Right cardiac atrium (tissue), 5 donors: ENCODE measurements at regions of chr4 and their contacts with region 1.

Region 1: DNA sequence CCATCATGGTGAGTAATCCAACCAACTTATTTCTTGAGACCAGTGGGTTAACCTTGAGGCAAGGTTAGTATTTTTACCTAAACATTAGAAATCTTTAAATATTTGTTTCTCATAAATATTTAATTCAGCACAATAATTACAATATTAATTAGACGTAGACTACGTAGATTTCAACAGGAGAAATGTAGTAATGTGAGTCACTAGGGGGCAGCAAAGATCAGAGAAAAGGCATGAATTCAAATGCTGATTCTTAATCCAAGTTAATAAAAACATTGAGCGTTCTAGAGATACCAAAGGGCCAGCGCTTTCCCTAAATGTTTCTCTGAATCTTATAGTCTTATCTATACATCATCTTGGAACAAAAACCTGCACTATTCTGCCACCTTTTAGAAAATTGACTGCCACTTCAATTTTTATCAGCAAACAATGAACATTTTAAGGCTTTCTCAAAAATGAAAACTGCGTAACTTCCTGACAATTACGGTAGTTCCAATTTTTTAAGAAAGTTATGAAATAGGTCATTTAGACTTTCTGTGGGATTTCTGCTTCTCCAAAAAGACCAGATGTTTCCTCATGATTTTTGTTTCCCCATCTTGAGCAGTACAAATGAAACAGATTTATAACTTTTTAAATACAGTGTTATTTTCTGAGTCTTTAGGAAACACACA is 180.7 kb downstream of the GASK1B start:
- DNase-seq: no peak
- ATAC-seq: peak; percentile 78 to 79
- H3K4me3 ChIP-seq: peak overlapping the region; percentile 89
- H3K27ac ChIP-seq: no peak overlapping the region
- H3K4me1 ChIP-seq: no peaks in the 10 kb centered on the region
- H3K27me3 ChIP-seq: no peaks in the 10 kb centered on the region

Region 2: GRCh38 chr4:157591245-157591644 is 400.9 kb before region 1 on chr4:
- intact Hi-C with region 1: no loop called
- DNase-seq: no peak
- ATAC-seq: no peak
- H3K4me3 ChIP-seq: no peak overlapping the region
- H3K27ac ChIP-seq: no peak overlapping the region
- H3K4me1 ChIP-seq: no peaks in the 10 kb centered on the region
- H3K27me3 ChIP-seq: no peaks in the 10 kb centered on the region

Region 3: GRCh38 chr4:158051401-158052235 is 59.4 kb after region 1 on chr4:
- intact Hi-C with region 1: loop called in 1 of 4 experiments (anchors 10 kb)
- DNase-seq: peak in 2 of 3 donors; percentile 46 to 68
- ATAC-seq: peak; percentile 90 to 92
- H3K4me3 ChIP-seq: no peak overlapping the region
- H3K27ac ChIP-seq: peak overlapping the region; percentile 70
- H3K4me1 ChIP-seq: no peaks in the 10 kb centered on the region
- H3K27me3 ChIP-seq: no peaks in the 10 kb centered on the region

Region 4: GRCh38 chr4:158172261-158173258 is 180.4 kb after region 1 on chr4 and contains the start of gene GASK1B:
- intact Hi-C with region 1: loop called (anchors 2 to 10 kb)
- DNase-seq: peak in 2 of 3 donors; percentile 24 to 63
- ATAC-seq: peak; percentile 74 to 77
- H3K4me3 ChIP-seq: peak within 1 kb of the TSS; percentile 50
- H3K27ac ChIP-seq: peak within 1 kb of the TSS; percentile 98
- H3K4me1 ChIP-seq: peaks cover 3% of the 10 kb centered on the region
- H3K27me3 ChIP-seq: no peaks in the 10 kb centered on the region
- total RNA-seq, gene GASK1B: 62.9 to 81.4 (median 76.7) TPM